Dendritic cell treated with granulocyte-macrophage colony-stimulating factor and Interleukin-4, amounts not matched to agents 40 ng/mL and 50 ng/mL, for 4 days (primary cell): ENCODE measurements at regions of chr5 and their contacts with region 1.

Region 1: DNA sequence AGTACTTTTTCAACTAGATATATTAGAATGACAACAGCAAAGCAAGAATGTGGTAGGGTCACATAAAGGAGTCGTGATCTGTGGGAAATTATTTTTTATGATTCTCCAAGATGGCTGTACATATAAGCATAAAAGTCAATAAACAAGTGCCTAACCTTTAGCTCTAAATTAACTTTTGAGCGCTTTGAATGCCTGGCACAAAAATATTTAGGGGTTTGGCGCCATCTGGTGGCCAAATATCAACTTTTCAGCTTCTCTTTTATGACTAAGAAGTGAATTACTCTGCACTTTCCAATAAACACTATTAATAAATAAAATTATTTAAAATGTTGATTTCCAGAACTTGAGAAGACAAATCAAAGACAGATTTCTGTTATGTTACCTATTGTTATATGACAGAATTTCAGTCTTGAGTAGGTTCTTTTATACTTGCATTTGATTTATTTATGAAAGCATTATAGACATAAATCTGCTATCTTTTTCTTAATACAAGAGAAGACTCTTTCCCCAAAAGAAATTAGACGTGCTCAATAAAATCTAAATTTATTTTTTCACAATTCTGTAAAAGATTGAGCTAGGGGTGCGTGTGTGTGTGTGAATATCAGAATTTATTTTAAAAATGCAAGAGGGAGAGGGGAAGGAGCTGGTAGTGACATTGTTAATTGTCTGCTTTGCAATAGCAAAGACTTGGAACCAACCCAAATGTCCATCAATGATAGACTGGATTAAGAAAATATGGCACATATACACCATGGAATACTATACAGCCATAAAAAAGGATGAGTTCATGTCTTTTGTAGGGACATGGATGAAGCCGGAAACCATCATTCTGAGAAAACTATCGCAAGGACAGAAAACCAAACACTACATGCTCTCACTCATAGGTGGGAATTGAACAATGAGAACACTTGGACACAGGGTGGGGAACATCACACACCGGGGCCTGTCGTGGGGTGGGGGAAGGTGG is 36.7 kb upstream of the ARRDC3 start:
- H3K4me3 Mint-ChIP-seq: no peak overlapping the region
- H3K27ac Mint-ChIP-seq: no peak overlapping the region
- H3K4me1 Mint-ChIP-seq: peaks cover 4% of the 10 kb centered on the region
- H3K27me3 Mint-ChIP-seq: no peaks in the 10 kb centered on the region

Region 2: GRCh38 chr5:90802474-90803317 is 617.2 kb before region 1 on chr5:
- intact Hi-C with region 1: loop called (anchors 5 kb)
- H3K4me3 Mint-ChIP-seq: no peak overlapping the region
- H3K27ac Mint-ChIP-seq: no peak overlapping the region
- H3K4me1 Mint-ChIP-seq: no peaks in the 10 kb centered on the region
- H3K27me3 Mint-ChIP-seq: no peaks in the 10 kb centered on the region

Region 3: GRCh38 chr5:90866333-90866732 is 553.5 kb before region 1 on chr5:
- intact Hi-C with region 1: loop called (anchors 1 kb)
- H3K4me3 Mint-ChIP-seq: no peak overlapping the region
- H3K27ac Mint-ChIP-seq: no peak overlapping the region
- H3K4me1 Mint-ChIP-seq: no peaks in the 10 kb centered on the region
- H3K27me3 Mint-ChIP-seq: no peaks in the 10 kb centered on the region

Region 4: GRCh38 chr5:90932052-90932699 is 487.7 kb before region 1 on chr5:
- intact Hi-C with region 1: loop called (anchors 1 kb)
- H3K4me3 Mint-ChIP-seq: no peak overlapping the region
- H3K27ac Mint-ChIP-seq: no peak overlapping the region
- H3K4me1 Mint-ChIP-seq: no peaks in the 10 kb centered on the region
- H3K27me3 Mint-ChIP-seq: peaks cover 3% of the 10 kb centered on the region